Heart right ventricle (tissue), 16 donors: ENCODE measurements at regions of chr2 and their contacts with region 1.

Region 1: DNA sequence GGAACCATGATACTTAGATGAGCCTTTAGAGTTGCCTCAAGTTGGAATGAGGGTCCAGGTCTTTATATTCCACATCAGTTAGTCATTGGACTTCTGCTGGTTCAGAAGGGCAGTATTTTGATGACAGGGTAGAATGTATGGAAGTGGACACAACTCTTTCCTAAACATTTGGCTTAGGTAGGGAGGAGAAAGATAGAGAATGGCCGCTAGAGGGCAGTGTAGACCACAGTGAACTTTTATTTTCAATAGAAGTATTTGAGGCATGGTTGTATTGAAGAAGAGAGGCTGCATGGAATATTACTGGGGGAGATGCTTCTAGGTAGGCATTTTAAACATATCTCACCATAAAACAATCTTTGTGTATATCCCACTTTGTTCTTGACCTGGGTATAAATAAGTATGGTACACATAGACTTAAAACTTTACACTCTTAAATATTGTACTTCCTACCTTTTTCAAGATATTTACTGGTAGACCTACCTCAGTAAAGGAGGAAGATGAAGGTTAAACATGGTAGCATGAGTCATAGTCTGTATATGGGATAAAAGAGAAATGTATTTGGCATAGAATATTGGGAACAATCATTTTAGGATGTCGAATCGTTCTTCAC is 497.6 kb upstream of the FAM98A start:
- DNase-seq: peak in 1 of 2 donors; percentile 41
- ATAC-seq: peak in 4 of 8 donors; percentile 39 to 59 (median 46)
- H3K4me3 ChIP-seq: no peak overlapping the region
- H3K27ac ChIP-seq: no peak overlapping the region
- H3K4me1 ChIP-seq: no peaks in the 10 kb centered on the region
- H3K27me3 ChIP-seq: no peaks in the 10 kb centered on the region
- CTCF ChIP-seq: peak; percentile 61 to 89 (median 76)

Region 2: DNA sequence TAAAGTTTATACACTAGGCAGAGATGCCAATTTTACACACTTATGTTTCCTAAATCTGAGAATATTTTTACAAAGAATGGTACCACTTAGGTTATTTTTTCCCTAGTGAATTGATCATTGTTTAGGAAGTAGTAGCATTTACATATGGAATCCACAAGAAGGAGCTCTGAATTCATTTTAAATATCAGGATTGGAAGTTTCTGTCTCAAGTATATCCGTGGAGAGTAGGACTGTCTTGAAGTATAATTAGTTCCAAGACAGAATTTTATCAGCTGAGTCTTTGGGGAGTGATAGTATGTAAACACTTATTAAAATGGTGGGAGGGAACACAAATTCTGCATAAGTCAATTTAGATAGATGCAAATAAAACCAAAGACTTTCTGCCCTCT is 415.3 kb before region 1 on chr2:
- intact Hi-C with region 1: loop called in 1 of 10 experiments (anchors 10 kb)
- DNase-seq: no peak
- ATAC-seq: no peak
- H3K4me3 ChIP-seq: no peak overlapping the region
- H3K27ac ChIP-seq: no peak overlapping the region
- H3K4me1 ChIP-seq: peaks cover 0 to 8% (median 0%) of the 10 kb centered on the region in 9 donors
- H3K27me3 ChIP-seq: no peaks in the 10 kb centered on the region
- CTCF ChIP-seq: peak in 8 of 9 donors; percentile 10 to 62 (median 36)

Region 3: GRCh38 chr2:34025186-34025585 is 71.5 kb before region 1 on chr2:
- intact Hi-C with region 1: no loop called
- DNase-seq: no peak
- ATAC-seq: no peak
- H3K4me3 ChIP-seq: no peak overlapping the region
- H3K27ac ChIP-seq: no peak overlapping the region
- H3K4me1 ChIP-seq: no peaks in the 10 kb centered on the region
- H3K27me3 ChIP-seq: no peaks in the 10 kb centered on the region
- CTCF ChIP-seq: no peak